ENCODE measurements at regions of chr7 and their contacts with region 1.

Region 1: GRCh38 chr7:101287032-101287431 is 34.6 kb downstream of the IFT22 start:
- DNase-seq: no peak
- H3K4me3 Mint-ChIP-seq: no peak overlapping the region
- H3K27ac Mint-ChIP-seq: no peak overlapping the region
- H3K4me1 Mint-ChIP-seq: no peaks in the 10 kb centered on the region
- H3K27me3 Mint-ChIP-seq: peaks cover 62% of the 10 kb centered on the region
- CTCF ChIP-seq: no peak

Region 2: GRCh38 chr7:101077303-101078089 is 209.5 kb before region 1 on chr7:
- CTCF ChIA-PET with region 1: interaction called, 14 read pairs
- intact Hi-C with region 1: no loop called
- DNase-seq: peak; percentile 89
- H3K4me3 Mint-ChIP-seq: no peak overlapping the region
- H3K27ac Mint-ChIP-seq: no peak overlapping the region
- H3K4me1 Mint-ChIP-seq: peaks cover 16% of the 10 kb centered on the region
- H3K27me3 Mint-ChIP-seq: peaks cover 24% of the 10 kb centered on the region
- CTCF ChIP-seq: peak; percentile 72

Measured in Calu3 (cell line).